ENCODE measurements at regions of chr12 and their contacts with region 1.

Region 1: DNA sequence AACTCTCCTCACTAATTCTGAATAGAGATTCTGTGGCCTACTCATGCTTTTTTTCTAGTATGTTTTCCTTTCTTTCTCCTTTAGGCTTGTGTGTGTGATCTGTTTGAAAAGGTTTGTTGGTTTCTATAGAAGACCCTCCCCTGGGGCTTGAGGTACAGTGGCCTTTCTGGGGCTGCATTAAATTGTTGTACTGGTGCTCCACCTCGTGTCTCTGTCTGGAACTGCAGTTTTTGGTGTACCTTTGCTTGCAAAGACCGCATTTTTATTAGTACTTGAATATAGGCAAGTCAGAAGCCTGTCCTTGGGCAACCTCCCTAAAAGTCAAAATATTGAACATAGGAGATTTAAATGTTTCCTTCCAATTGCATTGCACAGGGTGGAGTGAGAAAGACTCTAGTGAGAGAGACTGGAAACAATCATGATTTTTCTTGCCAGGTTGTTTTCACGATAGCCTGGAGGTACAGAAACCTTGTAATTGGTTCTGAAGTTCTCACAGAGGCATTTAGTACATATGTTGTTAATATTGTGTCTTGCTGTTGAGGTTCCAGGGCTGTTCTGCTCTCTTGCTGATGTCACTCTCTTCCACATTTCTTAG is 39.0 kb downstream of the SLCO1B1 start:
- DNase-seq: peak; percentile 57
- ATAC-seq: no peak
- H3K4me3 Mint-ChIP-seq: no peak overlapping the region
- H3K27ac Mint-ChIP-seq: no peak overlapping the region
- H3K4me1 Mint-ChIP-seq: no peaks in the 10 kb centered on the region
- H3K27me3 Mint-ChIP-seq: no peaks in the 10 kb centered on the region

Region 2: GRCh38 chr12:20463913-20464524 is 706.0 kb before region 1 on chr12:
- CTCF ChIA-PET with region 1: no interaction called
- POLR2A ChIA-PET with region 1: no interaction called
- intact Hi-C with region 1: loop called in 1 of 2 experiments (anchors 1 kb)
- DNase-seq: no peak
- ATAC-seq: no peak
- H3K4me3 Mint-ChIP-seq: no peak overlapping the region
- H3K27ac Mint-ChIP-seq: no peak overlapping the region
- H3K4me1 Mint-ChIP-seq: no peaks in the 10 kb centered on the region
- H3K27me3 Mint-ChIP-seq: no peaks in the 10 kb centered on the region

Region 3: DNA sequence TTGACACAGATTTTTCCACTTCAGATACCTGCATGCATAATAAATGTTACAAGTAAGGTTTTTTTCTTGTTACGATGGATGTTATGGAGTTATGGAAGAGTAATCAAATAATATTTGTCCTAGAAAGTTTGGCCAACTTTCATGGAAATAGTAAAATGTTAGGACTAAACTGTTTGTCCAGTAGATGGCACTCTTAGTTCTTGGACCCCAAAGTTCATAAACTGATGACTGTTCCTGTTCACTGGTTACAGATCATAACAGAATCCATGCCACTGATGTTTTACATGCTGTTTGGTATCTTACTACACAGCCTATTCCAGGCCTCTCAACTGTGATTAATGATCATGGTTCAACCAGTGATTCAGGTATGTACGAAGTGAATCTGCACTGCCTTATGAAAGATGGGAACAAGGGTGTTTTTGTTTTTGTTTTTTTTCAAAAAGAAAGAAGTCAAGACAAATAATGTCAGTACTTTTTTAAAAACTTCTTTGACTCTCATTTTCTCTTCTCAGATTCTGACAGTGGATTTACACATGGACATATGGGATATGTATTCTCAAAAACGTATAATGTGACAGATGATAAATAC is 523.6 kb before region 1 on chr12:
- CTCF ChIA-PET with region 1: no interaction called
- POLR2A ChIA-PET with region 1: no interaction called
- intact Hi-C with region 1: loop called (anchors 1 to 2 kb)
- DNase-seq: no peak
- ATAC-seq: no peak
- H3K4me3 Mint-ChIP-seq: no peak overlapping the region
- H3K27ac Mint-ChIP-seq: no peak overlapping the region
- H3K4me1 Mint-ChIP-seq: no peaks in the 10 kb centered on the region
- H3K27me3 Mint-ChIP-seq: no peaks in the 10 kb centered on the region

Region 4: DNA sequence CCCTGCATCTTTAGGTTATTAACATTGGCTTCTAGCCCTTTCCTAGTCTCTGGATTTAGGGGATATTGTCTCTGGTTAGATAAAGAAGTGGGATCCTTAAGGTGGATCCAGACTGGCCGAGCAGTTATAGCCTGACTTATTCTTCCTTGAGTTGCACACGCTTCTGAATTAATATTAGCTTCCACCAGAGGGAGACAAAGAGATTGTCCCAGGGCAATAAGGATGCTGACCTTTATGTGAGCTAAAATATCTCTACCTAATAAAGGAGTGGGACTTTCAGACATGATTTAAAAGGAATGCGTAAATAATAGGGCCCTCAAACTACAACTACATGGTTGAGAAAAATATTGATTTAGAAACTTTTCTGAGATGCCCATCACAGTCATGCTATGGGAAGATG is 219.7 kb before region 1 on chr12:
- CTCF ChIA-PET with region 1: no interaction called
- POLR2A ChIA-PET with region 1: no interaction called
- intact Hi-C with region 1: loop called in 1 of 2 experiments (anchors 1 kb)
- DNase-seq: no peak
- ATAC-seq: no peak
- H3K4me3 Mint-ChIP-seq: no peak overlapping the region
- H3K27ac Mint-ChIP-seq: no peak overlapping the region
- H3K4me1 Mint-ChIP-seq: no peaks in the 10 kb centered on the region
- H3K27me3 Mint-ChIP-seq: no peaks in the 10 kb centered on the region

Region 5: GRCh38 chr12:21129906-21130305 is 40.1 kb before region 1 on chr12:
- CTCF ChIA-PET with region 1: no interaction called
- POLR2A ChIA-PET with region 1: no interaction called
- intact Hi-C with region 1: no loop called
- DNase-seq: no peak
- ATAC-seq: no peak
- H3K4me3 Mint-ChIP-seq: no peak overlapping the region
- H3K27ac Mint-ChIP-seq: no peak overlapping the region
- H3K4me1 Mint-ChIP-seq: no peaks in the 10 kb centered on the region
- H3K27me3 Mint-ChIP-seq: no peaks in the 10 kb centered on the region

Region 6: DNA sequence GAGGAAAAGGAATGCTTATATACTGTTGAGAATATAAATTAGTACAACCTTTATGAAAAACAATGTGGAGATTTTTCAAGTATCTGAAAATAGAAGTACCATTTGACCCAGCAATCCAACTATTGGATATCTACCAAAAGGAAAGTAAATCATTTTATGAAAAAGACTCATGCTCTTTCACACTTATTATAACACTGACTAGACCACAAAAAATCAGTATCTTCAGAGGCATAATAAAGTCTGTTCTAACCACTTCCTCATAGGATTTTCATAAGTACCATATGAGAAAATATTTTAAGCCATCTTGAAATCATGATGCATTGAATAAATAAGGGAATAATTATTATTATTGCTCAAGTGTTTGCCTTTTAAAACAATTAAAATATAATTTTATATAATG is 51.8 kb after region 1 on chr12:
- CTCF ChIA-PET with region 1: no interaction called
- POLR2A ChIA-PET with region 1: no interaction called
- intact Hi-C with region 1: no loop called
- DNase-seq: no peak
- ATAC-seq: no peak
- H3K4me3 Mint-ChIP-seq: no peak overlapping the region
- H3K27ac Mint-ChIP-seq: no peak overlapping the region
- H3K4me1 Mint-ChIP-seq: no peaks in the 10 kb centered on the region
- H3K27me3 Mint-ChIP-seq: no peaks in the 10 kb centered on the region

Region 7: GRCh38 chr12:21340403-21340802 is 170.4 kb after region 1 on chr12:
- CTCF ChIA-PET with region 1: no interaction called
- POLR2A ChIA-PET with region 1: no interaction called
- intact Hi-C with region 1: no loop called
- DNase-seq: no peak
- ATAC-seq: no peak
- H3K4me3 Mint-ChIP-seq: no peak overlapping the region
- H3K27ac Mint-ChIP-seq: no peak overlapping the region
- H3K4me1 Mint-ChIP-seq: no peaks in the 10 kb centered on the region
- H3K27me3 Mint-ChIP-seq: no peaks in the 10 kb centered on the region